ENCODE measurements at regions of chr2 and their contacts with region 1.

Region 1: DNA sequence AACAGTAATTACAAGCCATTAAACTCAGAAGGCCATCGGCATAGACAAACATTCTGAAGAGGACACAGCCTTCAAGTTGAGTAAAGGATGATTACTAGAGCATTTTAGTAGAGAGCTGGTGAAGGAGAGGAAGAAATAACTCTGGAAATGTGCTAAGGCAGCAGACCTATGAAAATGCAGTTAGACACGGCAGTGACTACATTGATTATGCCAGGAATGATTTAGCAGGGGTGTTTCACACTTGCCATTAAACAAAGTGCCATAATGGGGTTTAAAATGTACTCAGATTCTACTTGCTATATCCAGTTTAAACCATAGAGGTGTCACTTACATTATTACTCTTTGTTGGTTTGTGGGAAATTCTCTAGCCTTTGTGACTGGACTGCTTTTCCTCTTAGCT is 372.3 kb downstream of the CPS1 start:
- DNase-seq: no peak
- H3K4me3 ChIP-seq: no peak overlapping the region
- H3K27ac ChIP-seq: no peak overlapping the region
- H3K4me1 ChIP-seq: no peaks in the 10 kb centered on the region
- H3K27me3 ChIP-seq: no peaks in the 10 kb centered on the region
- CTCF ChIP-seq: no peak
- EP300 ChIP-seq: no peak
- POLR2A ChIP-seq: no peak

Region 2: DNA sequence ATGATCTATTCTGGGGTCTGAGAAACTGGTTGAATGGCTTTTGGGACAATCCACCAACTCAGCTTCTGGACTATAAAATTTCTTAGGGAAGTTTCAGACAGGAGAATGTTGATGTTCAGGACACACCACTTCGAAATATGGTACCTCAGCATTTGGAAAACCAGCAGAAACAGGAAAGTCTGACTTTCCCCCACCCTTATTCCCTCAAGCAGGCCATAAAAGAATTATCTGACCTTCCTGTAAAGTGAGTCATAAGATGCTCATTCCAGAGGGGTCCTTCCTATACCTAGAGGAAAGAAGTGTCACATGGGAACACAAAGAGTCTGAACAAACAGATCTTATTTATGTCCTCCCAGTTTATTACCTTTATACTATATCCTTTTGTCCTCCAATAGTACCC is 42.7 kb after region 1 on chr2:
- intact Hi-C with region 1: loop called (anchors 2 kb)
- DNase-seq: no peak
- H3K4me3 ChIP-seq: no peak overlapping the region
- H3K27ac ChIP-seq: no peak overlapping the region
- H3K4me1 ChIP-seq: no peaks in the 10 kb centered on the region
- H3K27me3 ChIP-seq: no peaks in the 10 kb centered on the region
- CTCF ChIP-seq: no peak
- EP300 ChIP-seq: no peak
- POLR2A ChIP-seq: no peak

Region 3: GRCh38 chr2:210991107-210991506 is 62.4 kb after region 1 on chr2:
- intact Hi-C with region 1: no loop called
- DNase-seq: no peak
- H3K4me3 ChIP-seq: no peak overlapping the region
- H3K27ac ChIP-seq: no peak overlapping the region
- H3K4me1 ChIP-seq: no peaks in the 10 kb centered on the region
- H3K27me3 ChIP-seq: no peaks in the 10 kb centered on the region
- CTCF ChIP-seq: no peak
- EP300 ChIP-seq: no peak
- POLR2A ChIP-seq: no peak

Measured in esophagus muscularis mucosa (tissue), 4 donors.